ENCODE measurements at regions of chr4 and their contacts with region 1.

Region 1: GRCh38 chr4:52983563-52984303 is 121.6 kb downstream of the RASL11B start:
- DNase-seq: peak; percentile 42
- H3K4me3 ChIP-seq: no peak overlapping the region
- H3K27ac ChIP-seq: no peak overlapping the region
- H3K4me1 ChIP-seq: no peaks in the 10 kb centered on the region
- H3K27me3 ChIP-seq: no peaks in the 10 kb centered on the region
- CTCF ChIP-seq: peak in 3 of 4 experiments; percentile 51 to 77 (median 74)
- POLR2A ChIP-seq: no peak

Region 2: DNA sequence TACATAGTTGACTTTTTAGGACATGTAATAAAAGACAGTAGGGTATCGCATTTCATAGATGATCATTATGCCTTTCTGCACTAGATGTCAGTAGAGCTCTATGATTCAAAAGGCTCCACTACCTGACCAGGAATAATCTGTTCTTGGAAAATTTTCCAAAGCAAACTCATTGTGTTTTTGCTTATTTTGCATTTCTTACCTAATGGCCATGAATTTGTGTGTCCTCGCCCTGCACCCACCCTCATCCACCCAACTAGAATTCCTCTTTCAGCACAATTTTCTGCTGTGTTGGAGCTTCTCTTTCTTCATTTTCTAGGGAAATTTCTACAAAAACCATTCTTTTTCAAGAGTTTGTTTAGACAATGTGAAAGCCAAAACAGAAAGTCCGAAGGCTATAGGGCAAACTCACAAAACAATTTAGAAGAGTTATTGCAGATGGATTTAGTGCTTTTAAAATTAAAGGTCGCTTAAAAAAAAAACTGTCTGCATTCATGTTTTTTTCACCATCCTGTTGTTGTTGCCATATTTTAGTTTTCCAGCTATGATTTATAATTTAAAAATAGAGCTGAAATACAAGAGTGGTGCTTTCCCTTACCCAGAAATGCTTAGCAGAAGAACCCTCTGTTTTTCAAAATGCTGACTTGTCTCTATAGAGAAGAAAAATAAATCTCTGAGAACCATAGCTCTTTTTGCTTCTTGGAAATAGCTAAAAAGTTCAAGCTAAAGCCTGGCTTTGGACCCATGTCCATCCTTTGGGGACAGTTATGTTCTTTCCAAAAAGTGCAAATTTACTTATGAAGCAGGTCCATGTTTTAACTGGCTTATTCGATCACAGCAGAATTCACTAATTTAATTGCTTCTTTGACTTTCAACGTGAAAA is 748.9 kb before region 1 on chr4:
- intact Hi-C with region 1: loop called (anchors 5 kb)
- DNase-seq: no peak
- H3K4me3 ChIP-seq: no peak overlapping the region
- H3K27ac ChIP-seq: no peak overlapping the region
- H3K4me1 ChIP-seq: no peaks in the 10 kb centered on the region
- H3K27me3 ChIP-seq: no peaks in the 10 kb centered on the region
- CTCF ChIP-seq: peak in 3 of 4 experiments; percentile 33 to 65 (median 50)
- POLR2A ChIP-seq: no peak

Region 3: DNA sequence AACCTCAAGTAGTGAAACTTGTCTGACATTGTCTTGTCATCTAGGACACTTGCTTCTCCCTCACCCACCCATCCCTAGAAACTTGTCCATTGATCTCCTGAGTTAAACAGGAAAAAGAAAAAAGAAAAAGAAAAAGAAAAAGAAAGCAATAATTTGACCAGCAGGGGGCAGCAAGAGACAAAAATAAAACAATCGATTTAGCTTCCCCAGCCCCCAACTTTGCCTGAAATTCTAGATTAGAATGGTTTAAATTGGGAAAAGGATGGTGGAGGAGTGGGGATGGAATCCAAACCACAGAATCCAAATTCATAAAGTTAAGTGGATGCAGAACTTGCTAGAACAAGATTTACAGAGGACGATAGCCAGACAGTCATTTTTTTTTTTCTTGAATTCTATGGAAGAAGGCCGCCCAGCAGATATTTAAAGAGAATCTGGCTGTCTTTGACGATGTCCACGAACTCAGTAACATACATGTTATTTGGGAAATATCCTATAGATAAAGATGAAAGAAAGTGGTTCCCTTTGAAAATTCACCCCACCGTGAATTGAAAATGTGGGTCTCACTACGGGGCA is 607.5 kb before region 1 on chr4:
- intact Hi-C with region 1: loop called (anchors 2 kb)
- DNase-seq: no peak
- H3K4me3 ChIP-seq: no peak overlapping the region
- H3K27ac ChIP-seq: no peak overlapping the region
- H3K4me1 ChIP-seq: no peaks in the 10 kb centered on the region
- H3K27me3 ChIP-seq: no peaks in the 10 kb centered on the region
- CTCF ChIP-seq: peak; percentile 48 to 77 (median 54)
- POLR2A ChIP-seq: no peak

Region 4: DNA sequence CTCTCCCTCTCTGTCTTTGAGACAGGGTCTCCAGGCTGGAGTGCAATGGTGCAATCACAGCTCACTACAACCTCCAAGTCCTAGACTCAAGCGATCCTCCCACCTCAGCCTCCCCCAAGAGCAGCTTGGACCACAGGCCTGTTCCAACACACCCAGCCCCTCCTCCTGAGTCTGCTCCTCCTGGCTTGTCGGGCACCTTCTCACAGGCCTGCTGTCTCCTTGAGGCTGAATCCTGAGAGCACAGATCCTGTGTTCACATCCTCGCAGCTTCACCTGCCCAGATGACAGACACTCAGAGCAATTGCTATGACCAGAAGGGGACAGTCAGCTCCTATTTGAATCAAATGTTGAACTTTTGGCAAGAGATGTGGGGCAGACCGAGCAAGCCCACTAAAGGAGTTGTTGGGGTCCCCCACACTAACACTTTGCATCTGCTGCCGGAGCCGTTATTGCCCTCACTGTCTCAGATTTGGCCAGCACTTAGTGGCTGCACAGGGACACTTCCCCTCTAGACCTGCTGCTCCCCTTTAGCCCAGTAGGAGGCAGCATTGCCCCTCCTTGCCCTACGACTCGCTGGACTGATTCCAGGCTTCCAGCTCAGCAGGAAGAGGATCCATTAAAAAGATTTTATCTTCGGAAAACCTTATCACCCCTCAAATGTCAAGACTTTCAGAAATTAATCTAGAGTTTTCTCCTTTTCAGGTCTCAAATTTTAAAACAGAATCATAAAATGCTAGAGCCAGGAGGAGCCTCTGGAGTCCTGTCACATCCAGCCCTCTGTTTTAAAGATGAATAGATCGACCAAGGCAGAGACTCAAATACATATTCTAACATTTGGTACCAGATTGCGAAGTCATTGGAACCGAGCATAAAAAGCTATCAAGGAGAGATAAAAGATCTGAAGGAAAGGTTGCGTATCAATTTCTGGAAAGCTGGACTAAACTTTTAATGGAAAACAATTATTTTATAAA is 438.3 kb before region 1 on chr4:
- intact Hi-C with region 1: loop called (anchors 2 kb)
- DNase-seq: peak; percentile 60
- H3K4me3 ChIP-seq: no peak overlapping the region
- H3K27ac ChIP-seq: no peak overlapping the region
- H3K4me1 ChIP-seq: no peaks in the 10 kb centered on the region
- H3K27me3 ChIP-seq: no peaks in the 10 kb centered on the region
- CTCF ChIP-seq: peak; percentile 76 to 88 (median 86)
- POLR2A ChIP-seq: no peak

Region 5: DNA sequence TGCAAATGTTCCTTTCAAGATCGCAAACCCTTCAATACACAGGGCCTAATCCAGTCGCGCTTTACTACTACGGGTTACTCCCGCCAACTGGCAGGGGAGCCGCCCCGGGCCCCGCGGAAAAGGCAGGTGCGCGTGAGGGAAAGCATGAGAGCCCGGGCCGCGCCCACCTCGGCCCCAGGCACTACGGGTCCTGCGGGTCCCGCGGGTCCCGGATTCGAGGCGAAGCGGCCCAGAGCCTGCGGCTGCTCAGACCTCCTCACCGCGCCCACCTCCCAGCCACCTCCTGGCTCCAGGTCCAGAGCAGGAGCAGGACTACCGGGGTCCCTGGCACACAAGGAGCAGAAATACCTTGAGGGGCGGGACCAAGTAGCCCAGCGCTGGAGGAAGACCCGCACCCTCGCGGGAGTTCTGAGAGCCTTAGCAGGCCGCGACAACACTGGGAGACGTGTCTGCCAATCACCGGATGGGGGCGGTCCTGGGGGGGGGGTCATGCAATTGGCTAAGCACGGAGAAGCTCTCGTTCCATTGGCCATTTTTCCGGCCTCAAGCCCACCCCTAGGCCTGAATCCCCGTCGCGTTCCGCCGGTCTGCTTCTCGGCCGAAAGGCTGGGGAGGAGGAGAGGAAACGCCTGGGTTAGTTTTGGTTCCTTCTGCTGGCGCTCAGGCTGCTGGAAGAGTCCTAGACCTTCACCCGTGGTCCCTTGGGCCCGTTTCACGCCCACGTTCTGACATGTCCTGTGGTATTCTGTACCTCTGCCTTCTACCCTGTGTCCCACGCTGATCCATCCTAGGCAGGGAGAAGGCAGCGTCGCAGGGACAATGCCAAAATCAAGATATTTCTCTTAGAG is 261.5 kb before region 1 on chr4:
- intact Hi-C with region 1: loop called (anchors 5 kb)
- DNase-seq: peak; percentile 94
- H3K4me3 ChIP-seq: peak overlapping the region; percentile 61 to 71
- H3K27ac ChIP-seq: peak overlapping the region; percentile 83 to 92
- H3K4me1 ChIP-seq: no peaks in the 10 kb centered on the region
- H3K27me3 ChIP-seq: no peaks in the 10 kb centered on the region
- CTCF ChIP-seq: peak in 2 of 4 experiments; percentile 18 to 43
- POLR2A ChIP-seq: peak; percentile 31

Measured in prostate gland (tissue), 2 donors.